Thyroid gland (tissue), 4 donors: ENCODE measurements at regions of chr6 and their contacts with region 1.

Region 1: GRCh38 chr6:33014841-33015634 is 5.6 kb upstream of the HLA-DOA start:
- DNase-seq: peak; percentile 9 to 25
- H3K4me3 ChIP-seq: no peak overlapping the region
- H3K27ac ChIP-seq: no peak overlapping the region
- H3K4me1 ChIP-seq: peaks cover 5 to 17% of the 10 kb centered on the region in 2 donors
- H3K27me3 ChIP-seq: peaks cover 3% of the 10 kb centered on the region
- CTCF ChIP-seq: peak; percentile 48 to 83 (median 76)
- POLR2A ChIP-seq: no peak

Region 2: DNA sequence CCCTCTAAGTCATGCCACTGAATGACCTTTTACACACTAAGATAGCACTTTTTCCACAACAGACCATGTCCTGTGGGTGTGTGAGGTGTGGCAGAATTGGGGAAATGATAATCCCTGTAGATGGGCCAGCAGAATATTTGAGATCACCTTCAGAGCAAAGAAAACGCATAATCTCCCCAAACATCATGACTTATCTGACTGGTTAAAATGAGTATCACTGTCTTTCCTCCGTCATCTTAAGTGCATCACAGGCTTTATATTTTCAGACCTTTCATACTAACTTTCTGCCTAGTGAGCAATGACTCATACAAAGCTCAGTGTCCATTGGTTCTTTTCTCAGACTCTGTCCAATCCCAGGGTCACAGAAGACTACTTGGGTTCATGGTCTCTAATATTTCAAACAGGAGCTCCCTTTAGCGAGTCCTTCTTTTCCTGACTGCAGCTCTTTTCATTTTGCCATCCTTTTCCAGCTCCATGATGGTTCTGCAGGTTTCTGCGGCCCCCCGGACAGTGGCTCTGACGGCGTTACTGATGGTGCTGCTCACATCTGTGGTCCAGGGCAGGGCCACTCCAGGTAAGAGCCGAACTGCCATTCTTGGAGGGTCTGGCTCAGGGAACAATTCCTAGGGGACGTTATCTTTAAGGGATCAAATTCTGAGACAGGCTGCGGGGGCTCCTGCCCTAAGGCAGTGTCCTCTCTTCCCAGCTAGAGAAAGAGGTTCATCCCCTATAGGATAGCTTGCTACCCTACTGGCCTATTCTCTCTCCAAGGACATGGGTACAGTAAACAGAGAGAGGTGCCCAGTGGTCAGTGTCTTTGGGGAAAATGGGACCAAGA is 60.7 kb after region 1 on chr6 and contains the start of gene HLA-DPB1:
- intact Hi-C with region 1: loop called (anchors 5 kb)
- DNase-seq: no peak
- H3K4me3 ChIP-seq: peak within 1 kb of the TSS in 1 of 3 donors; percentile 23
- H3K27ac ChIP-seq: peak within 1 kb of the TSS; percentile 12 to 66 (median 44)
- H3K4me1 ChIP-seq: peaks cover 4 to 7% of the 10 kb centered on the region in 2 donors
- H3K27me3 ChIP-seq: no peaks in the 10 kb centered on the region
- CTCF ChIP-seq: no peak
- POLR2A ChIP-seq: peak in 1 of 2 donors; percentile 27
- total RNA-seq, gene HLA-DPB1: 33.8 to 44.7 (median 41.0) TPM

Region 3: GRCh38 chr6:33091957-33092356 is 76.9 kb after region 1 on chr6:
- intact Hi-C with region 1: loop called (anchors 5 kb)
- DNase-seq: peak; percentile 40 to 42
- H3K4me3 ChIP-seq: no peak overlapping the region
- H3K27ac ChIP-seq: no peak overlapping the region
- H3K4me1 ChIP-seq: no peaks in the 10 kb centered on the region
- H3K27me3 ChIP-seq: no peaks in the 10 kb centered on the region
- CTCF ChIP-seq: peak in 5 of 6 experiments; percentile 34 to 52 (median 40)
- POLR2A ChIP-seq: no peak